ENCODE measurements at regions of chr12 and their contacts with region 1.

Region 1: GRCh38 chr12:20220339-20220738 is 148.0 kb upstream of the PDE3A start:
- DNase-seq: no peak
- ATAC-seq: no peak
- H3K4me3 ChIP-seq: no peak overlapping the region
- H3K27ac ChIP-seq: no peak overlapping the region
- H3K4me1 ChIP-seq: no peaks in the 10 kb centered on the region
- H3K27me3 ChIP-seq: no peaks in the 10 kb centered on the region
- CTCF ChIP-seq: no peak

Region 2: GRCh38 chr12:20044846-20045245 is 175.5 kb before region 1 on chr12:
- CTCF ChIA-PET with region 1: no interaction called
- POLR2A ChIA-PET with region 1: no interaction called
- in situ Hi-C with region 1: no loop called
- intact Hi-C with region 1: no loop called
- DNase-seq: no peak
- ATAC-seq: no peak
- H3K4me3 ChIP-seq: no peak overlapping the region
- H3K27ac ChIP-seq: no peak overlapping the region
- H3K4me1 ChIP-seq: no peaks in the 10 kb centered on the region
- H3K27me3 ChIP-seq: no peaks in the 10 kb centered on the region
- CTCF ChIP-seq: no peak

Region 3: DNA sequence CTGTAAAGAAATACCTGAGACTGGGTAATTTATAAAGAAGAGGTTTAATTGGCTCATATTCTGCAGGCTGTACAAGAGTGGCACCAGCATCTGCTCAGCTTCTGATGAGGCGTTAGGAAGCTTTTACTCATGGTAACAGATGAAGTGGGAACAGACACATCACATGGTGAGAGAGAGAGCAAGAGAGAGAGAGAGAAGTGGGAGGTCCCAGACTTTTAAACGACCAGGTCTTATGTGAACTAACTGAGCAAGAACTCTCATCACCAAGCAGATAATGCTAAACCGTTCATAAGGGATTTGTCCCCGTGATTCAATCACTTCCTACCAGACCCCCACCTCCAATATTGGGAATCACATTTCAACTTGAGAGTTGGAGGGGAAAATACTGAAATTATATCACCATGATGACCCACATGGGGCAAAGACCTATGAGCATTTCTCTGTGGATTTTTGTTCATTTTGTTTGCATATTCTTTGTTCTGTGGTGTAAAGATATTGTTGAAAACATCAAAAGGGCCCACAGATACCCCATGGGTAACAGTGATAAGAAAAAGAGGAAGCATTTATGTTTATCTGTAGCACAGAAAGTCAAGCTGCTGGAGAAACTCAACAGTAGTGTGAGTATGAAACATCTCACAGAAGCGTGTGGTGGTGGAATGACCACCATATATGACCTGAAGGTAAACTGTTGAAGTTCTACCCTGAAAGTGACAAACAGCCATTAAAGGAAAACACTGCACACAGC is 12.8 kb after region 1 on chr12:
- CTCF ChIA-PET with region 1: interaction called, 14 read pairs
- POLR2A ChIA-PET with region 1: no interaction called
- in situ Hi-C with region 1: no loop called
- intact Hi-C with region 1: no loop called
- DNase-seq: no peak
- ATAC-seq: no peak
- H3K4me3 ChIP-seq: no peak overlapping the region
- H3K27ac ChIP-seq: no peak overlapping the region
- H3K4me1 ChIP-seq: no peaks in the 10 kb centered on the region
- H3K27me3 ChIP-seq: no peaks in the 10 kb centered on the region
- CTCF ChIP-seq: no peak